ENCODE measurements at regions of chr15 and their contacts with region 1.

Region 1: GRCh38 chr15:66386204-66387123 is at the start of gene MAP2K1:
- DNase-seq: peak; percentile 99
- H3K4me3 Mint-ChIP-seq: peak within 1 kb of the TSS; percentile 98
- H3K27ac Mint-ChIP-seq: peak within 1 kb of the TSS; percentile 76
- H3K4me1 Mint-ChIP-seq: peaks cover 28% of the 10 kb centered on the region
- H3K27me3 Mint-ChIP-seq: no peaks in the 10 kb centered on the region
- CTCF ChIP-seq: peak; percentile 66
- total RNA-seq, gene MAP2K1: 67.6 and 69.1 TPM in 2 replicates

Region 2: DNA sequence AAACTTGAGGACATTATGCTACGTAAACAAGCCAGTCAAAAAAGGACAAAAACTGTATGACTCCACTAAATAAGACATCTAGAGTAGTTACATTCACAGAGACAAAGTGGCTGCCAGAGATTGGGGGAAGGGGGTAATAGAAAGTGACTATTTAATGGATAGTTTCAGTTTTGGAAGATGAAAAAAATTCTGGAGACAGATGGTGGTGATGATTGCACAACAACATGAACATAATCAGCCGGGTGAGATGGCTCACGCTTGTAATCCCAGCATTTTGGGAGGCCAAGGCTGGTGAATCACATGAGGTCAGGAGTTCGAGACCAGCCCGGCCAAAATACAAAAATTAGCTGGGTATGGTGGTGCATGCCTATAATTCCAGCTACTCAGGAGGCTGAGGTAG is 909.6 kb before region 1 on chr15:
- CTCF ChIA-PET with region 1: no interaction called
- intact Hi-C with region 1: no loop called
- DNase-seq: no peak
- H3K4me3 Mint-ChIP-seq: no peak overlapping the region
- H3K27ac Mint-ChIP-seq: no peak overlapping the region
- H3K4me1 Mint-ChIP-seq: no peaks in the 10 kb centered on the region
- H3K27me3 Mint-ChIP-seq: no peaks in the 10 kb centered on the region
- CTCF ChIP-seq: no peak

Region 3: DNA sequence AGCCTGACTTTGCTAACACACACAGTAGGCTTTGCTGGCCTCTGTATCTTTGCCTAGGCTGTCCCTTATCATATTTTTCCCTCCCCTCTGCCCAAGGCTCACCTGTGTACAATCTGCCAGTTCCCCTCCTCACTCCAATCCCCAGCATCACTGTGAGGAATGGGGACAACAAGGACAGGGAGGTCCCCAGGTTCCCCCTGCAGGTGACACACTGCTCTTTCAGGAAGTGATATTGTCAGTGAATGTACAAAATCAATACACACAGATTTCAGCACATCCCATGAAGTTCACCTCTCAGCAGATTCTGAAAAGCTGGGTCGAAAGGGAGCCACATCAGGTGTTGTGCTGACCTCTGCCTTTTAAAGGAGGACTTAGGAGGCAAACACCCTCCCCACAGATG is 339.7 kb before region 1 on chr15:
- CTCF ChIA-PET with region 1: no interaction called
- intact Hi-C with region 1: no loop called
- DNase-seq: peak; percentile 52
- H3K4me3 Mint-ChIP-seq: no peak overlapping the region
- H3K27ac Mint-ChIP-seq: no peak overlapping the region
- H3K4me1 Mint-ChIP-seq: no peaks in the 10 kb centered on the region
- H3K27me3 Mint-ChIP-seq: peaks cover 14% of the 10 kb centered on the region
- CTCF ChIP-seq: peak; percentile 71

Region 4: DNA sequence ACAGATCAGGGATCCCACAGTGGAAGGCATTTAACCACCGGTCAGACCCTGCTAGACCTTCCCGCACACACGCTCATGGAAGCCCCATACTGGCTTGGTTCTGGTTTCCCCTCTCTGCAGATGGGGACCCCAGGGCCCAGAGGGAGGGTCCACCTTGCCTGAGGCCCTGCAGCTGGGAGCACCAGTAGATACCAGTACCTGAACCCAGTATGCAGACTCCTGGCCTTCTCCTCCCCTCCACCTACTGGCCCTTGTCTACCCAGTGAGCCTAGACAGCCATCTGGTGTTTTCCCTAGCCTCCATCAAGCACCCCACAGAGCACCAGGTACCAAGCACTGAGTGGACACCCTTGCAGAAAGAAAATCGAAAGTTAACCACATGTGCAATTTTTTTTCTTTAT is 198.0 kb before region 1 on chr15:
- CTCF ChIA-PET with region 1: no interaction called
- intact Hi-C with region 1: no loop called
- DNase-seq: no peak
- H3K4me3 Mint-ChIP-seq: no peak overlapping the region
- H3K27ac Mint-ChIP-seq: no peak overlapping the region
- H3K4me1 Mint-ChIP-seq: no peaks in the 10 kb centered on the region
- H3K27me3 Mint-ChIP-seq: peaks cover 63% of the 10 kb centered on the region
- CTCF ChIP-seq: no peak

Region 5: DNA sequence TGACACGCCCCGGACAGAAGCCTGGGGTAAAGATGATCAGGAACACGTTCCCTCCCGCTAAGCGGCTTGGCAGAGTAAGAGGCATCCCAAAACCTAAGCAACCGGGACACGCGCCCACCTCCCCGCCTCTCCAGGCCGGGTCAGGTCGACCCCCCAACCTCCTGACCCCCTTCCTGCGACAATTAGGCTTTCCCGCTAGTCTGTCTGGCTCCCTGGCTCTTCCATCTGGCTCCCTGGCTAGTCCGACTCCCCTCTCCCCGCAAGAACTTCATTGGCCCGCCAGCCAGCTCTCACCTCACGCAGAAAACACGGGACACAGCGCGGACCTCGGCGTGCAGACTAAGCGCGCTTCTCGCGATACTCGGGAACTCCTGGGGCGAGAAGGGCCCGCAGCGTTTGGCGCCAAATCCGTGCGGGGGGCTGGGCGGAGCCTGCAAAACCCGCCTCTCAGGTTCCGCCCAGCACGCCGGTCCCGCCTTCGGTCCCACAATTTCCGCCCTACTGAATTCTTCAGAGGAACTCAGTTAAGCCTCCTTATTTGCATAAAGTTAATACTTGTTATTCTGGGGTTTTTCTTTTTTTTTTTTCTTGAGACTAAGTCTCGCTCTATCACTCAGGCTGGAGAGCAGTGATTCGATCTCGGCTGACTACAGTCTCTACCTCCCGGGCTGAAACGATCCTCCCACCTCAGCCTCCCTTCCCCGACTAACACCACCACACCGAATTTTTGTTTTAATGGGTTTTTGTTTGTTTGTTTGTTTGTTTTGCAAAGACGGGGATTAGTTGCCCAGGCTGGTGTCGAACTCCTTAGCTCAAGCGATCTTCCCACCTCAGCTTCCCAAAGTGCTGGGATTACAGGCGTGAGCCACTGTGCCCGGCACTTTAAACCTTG is 29.9 kb before region 1 on chr15 and contains the start of gene TIPIN:
- CTCF ChIA-PET with region 1: interaction called, 5 read pairs
- intact Hi-C with region 1: loop called (anchors 1 kb)
- DNase-seq: peak; percentile 98
- H3K4me3 Mint-ChIP-seq: peak within 1 kb of the TSS; percentile 99
- H3K27ac Mint-ChIP-seq: peak within 1 kb of the TSS; percentile 98
- H3K4me1 Mint-ChIP-seq: peaks cover 32% of the 10 kb centered on the region
- H3K27me3 Mint-ChIP-seq: no peaks in the 10 kb centered on the region
- CTCF ChIP-seq: no peak
- total RNA-seq, gene TIPIN: 19.8 and 27.0 TPM in 2 replicates

Region 6: DNA sequence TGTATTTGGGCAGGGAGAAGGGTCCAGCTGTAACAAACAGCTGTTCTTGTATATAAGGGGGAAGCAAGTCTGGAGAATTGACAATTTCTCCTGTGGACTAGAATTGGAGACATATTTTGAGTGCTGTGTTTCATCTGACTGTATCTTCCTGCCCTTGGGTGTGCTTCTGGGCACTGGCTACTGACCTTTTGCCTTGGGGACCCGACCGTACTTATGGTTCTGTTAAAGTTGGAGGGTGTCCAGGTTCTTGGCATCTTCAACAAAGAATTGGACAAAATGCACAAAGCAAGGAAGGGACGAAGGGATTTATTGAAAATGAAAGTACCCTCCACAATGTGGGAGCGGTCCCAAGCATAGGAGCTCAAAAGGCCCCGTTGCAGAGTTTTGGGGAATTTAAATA is 31.3 kb after region 1 on chr15:
- CTCF ChIA-PET with region 1: no interaction called
- intact Hi-C with region 1: no loop called
- DNase-seq: no peak
- H3K4me3 Mint-ChIP-seq: no peak overlapping the region
- H3K27ac Mint-ChIP-seq: no peak overlapping the region
- H3K4me1 Mint-ChIP-seq: no peaks in the 10 kb centered on the region
- H3K27me3 Mint-ChIP-seq: no peaks in the 10 kb centered on the region
- CTCF ChIP-seq: no peak

Region 7: DNA sequence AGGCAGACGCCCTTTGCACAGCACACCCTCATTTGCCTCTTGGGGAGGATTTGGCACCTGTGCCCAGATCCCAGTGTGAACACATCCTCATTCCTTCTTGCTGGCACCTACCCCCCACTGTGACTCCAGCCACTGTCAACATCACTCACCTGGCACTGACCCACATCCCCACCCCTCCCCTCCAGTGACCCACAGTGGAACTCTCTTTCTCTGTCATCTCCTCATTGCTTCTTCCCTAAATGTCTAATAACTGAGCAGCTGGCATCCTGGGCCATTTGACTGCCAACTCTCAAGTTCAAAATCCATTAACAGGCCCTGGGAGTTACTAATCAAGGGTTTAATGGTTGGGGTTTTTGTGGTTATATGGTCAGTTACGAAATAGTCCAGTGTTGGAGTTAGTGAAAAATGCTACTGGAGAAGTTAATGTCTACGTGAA is 96.7 kb after region 1 on chr15:
- CTCF ChIA-PET with region 1: interaction called, 6 read pairs
- intact Hi-C with region 1: loop called (anchors 5 kb)
- DNase-seq: peak; percentile 90
- H3K4me3 Mint-ChIP-seq: no peak overlapping the region
- H3K27ac Mint-ChIP-seq: peak overlapping the region; percentile 16
- H3K4me1 Mint-ChIP-seq: peaks cover 43% of the 10 kb centered on the region
- H3K27me3 Mint-ChIP-seq: no peaks in the 10 kb centered on the region
- CTCF ChIP-seq: no peak

Region 8: DNA sequence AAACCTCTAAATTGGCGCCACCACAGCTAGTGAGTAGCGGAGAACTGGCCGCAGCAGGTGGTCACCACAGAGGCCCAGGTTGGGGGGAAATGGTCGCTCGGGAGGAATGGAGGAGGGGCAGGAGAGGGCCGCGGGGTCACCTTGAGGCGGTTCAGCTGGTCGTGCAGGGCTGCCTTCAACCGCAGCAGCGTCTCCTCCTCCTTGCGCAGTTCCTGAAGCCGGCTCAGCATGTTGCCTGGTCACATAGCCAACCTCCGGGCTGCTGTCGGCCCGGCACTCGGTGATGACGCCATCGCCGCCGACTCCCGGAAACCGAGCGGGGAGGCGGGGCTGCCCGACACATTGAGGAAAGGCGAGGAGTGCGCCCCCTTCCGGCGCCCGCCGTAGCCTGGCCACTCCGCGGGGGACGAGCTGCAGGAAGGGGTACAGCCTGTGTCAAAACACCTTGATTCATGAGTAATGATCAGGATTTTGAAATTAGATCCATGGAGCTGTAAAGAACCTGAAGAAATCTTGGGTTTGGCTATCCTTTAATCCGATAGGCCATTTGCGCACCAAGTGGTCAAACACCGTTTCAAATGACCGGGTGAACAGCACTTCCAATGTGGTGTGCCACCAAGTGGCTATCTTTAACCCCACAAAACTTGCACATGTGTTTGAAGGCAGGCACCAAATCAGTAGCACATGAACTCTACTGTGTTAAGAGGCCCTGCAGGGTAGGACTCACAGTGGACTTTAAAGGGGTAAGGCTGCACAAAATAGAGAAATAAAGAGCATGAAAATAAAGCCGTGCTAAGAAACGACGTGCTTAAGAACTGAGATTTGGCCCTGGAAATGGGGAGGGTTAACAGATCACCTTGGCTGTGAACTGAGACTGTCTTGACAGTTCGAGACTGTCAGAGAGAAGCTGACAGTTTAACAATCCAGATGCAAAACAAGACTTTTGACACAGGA is 111.3 kb after region 1 on chr15 and contains the start of gene SNAPC5:
- CTCF ChIA-PET with region 1: interaction called, 21 read pairs
- intact Hi-C with region 1: loop called (anchors 1 kb)
- DNase-seq: peak; percentile 99
- H3K4me3 Mint-ChIP-seq: peak within 1 kb of the TSS; percentile 91
- H3K27ac Mint-ChIP-seq: peak within 1 kb of the TSS; percentile 93
- H3K4me1 Mint-ChIP-seq: peaks cover 34% of the 10 kb centered on the region
- H3K27me3 Mint-ChIP-seq: no peaks in the 10 kb centered on the region
- CTCF ChIP-seq: peak; percentile 96
- total RNA-seq, gene SNAPC5: 47.6 and 52.1 TPM in 2 replicates